ENCODE measurements at regions of chr14 and their contacts with region 1.

Region 1: GRCh38 chr14:89416002-89416995 is 734 bp downstream of the FOXN3 start:
- DNase-seq: peak; percentile 99
- H3K4me3 ChIP-seq: peak overlapping the region; percentile 55 to 78 (median 68)
- H3K27ac ChIP-seq: peak overlapping the region; percentile 65
- H3K4me1 ChIP-seq: peaks cover 6% of the 10 kb centered on the region
- H3K27me3 ChIP-seq: no peaks in the 10 kb centered on the region
- CTCF ChIP-seq: no peak
- POLR2A ChIP-seq: no peak

Region 2: GRCh38 chr14:89027097-89027740 is 389.1 kb before region 1 on chr14:
- CTCF ChIA-PET with region 1: no interaction called
- POLR2A ChIA-PET with region 1: no interaction called
- dilution Hi-C with region 1: no loop called
- intact Hi-C with region 1: loop called (anchors 5 kb)
- DNase-seq: peak; percentile 25
- H3K4me3 ChIP-seq: peak overlapping the region; percentile 40 to 65 (median 56)
- H3K27ac ChIP-seq: no peak overlapping the region
- H3K4me1 ChIP-seq: peaks cover 9% of the 10 kb centered on the region
- H3K27me3 ChIP-seq: peaks cover 25 to 39% of the 10 kb centered on the region in 2 experiments
- CTCF ChIP-seq: peak; percentile 74 to 88
- POLR2A ChIP-seq: no peak

Region 3: DNA sequence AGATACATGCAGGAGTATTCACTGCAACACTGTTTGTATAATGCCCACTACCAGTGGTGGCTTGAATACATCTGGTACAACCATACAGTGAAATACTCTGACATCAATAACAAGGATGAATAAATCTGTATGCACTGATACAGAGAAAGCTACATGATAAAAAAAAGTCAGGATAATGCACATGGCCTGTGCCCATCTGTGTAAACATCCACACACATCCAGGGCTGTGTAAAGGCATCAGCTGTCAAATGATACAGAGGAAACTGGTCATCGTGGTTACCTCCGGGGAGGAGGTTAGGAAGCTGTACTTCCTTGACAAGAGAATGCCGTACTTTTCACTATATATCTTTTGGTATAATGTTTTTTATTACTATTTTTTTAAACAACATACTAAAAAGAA is 175.9 kb before region 1 on chr14:
- CTCF ChIA-PET with region 1: no interaction called
- POLR2A ChIA-PET with region 1: no interaction called
- dilution Hi-C with region 1: no loop called
- intact Hi-C with region 1: loop called (anchors 5 kb)
- DNase-seq: peak; percentile 22
- H3K4me3 ChIP-seq: no peak overlapping the region
- H3K27ac ChIP-seq: peak overlapping the region; percentile 54
- H3K4me1 ChIP-seq: peaks cover 17% of the 10 kb centered on the region
- H3K27me3 ChIP-seq: no peaks in the 10 kb centered on the region
- CTCF ChIP-seq: no peak
- POLR2A ChIP-seq: no peak

Region 4: DNA sequence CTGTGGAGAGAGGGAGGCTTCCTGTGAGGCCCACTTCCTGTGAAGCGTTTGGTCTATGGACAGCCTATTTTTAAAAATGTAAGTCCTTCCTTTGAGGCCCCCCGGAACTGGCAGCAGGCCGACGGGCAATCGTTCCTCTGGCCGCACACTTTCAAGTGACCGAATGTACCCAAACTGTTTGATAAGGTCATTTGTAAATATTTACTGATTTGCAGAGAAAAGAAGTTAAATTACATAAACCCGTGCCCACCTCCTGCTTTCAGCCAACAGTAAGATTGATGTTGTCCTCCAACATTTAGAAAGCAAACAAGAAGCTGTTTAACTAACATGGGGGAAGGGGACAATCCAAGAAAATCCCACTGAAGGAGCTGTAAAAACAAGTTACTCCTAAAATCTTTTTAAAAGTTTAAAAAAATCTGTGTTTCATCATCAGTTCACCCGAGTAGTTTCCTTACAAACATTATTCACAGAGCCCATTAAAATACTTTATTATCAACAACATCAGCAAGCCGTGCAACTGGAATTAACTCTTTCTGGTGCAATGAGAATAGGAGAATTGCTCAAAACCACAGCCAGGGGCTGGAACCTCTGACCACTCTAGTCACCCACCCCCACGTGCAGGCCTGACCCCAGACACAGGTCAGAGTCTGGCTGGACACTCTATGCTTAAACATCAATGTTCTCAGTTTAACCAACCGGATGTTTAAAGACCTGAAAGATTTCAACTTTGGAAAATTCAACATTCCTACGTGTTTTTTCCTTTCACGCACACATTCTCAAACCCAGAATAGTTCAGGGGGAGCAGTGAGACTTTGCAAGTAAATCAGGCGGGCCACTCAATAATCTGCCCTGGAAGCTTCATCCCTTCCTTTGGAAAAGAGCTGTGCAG is 64.5 kb before region 1 on chr14:
- CTCF ChIA-PET with region 1: no interaction called
- POLR2A ChIA-PET with region 1: no interaction called
- dilution Hi-C with region 1: no loop called
- intact Hi-C with region 1: loop called (anchors 5 kb)
- DNase-seq: peak; percentile 51
- H3K4me3 ChIP-seq: no peak overlapping the region
- H3K27ac ChIP-seq: peak overlapping the region; percentile 10
- H3K4me1 ChIP-seq: peaks cover 14% of the 10 kb centered on the region
- H3K27me3 ChIP-seq: no peaks in the 10 kb centered on the region
- CTCF ChIP-seq: no peak
- POLR2A ChIP-seq: no peak

Region 5: DNA sequence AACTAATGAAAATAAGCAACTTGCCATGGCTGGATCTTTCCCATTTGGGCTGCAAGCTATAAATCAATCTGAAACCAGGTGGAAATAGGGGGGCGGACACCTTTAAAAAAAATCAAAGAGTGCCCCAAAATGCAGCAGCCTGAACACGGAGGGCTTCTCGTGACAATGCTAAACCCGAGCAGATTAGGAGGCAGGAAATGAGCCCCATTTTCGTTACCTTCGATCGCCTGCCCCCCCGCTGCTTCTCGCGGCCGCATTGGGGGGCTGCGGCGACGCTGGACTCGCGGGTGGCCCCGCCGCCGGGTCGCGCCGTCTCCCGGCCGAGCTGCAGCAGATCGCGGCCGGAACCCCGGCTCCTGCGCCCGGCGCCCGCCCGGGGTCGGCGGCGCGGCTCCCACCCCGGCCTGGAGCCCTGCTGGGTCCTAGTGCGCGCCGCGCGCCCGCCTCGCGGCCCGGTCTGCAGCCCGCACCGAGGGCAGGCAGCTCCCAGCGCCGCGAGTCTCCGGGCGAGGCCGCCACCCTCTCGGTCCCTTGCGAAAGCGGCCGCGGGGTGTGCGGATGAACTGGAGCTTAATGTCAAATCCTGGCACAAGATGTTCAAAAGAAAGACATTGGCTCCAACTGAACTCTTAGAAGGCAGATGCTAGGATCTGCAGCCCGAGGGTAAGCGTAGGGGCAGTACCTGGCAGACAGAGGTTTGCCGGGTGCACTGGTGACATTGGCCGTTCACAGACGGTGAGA is 202.7 kb after region 1 on chr14:
- CTCF ChIA-PET with region 1: no interaction called
- POLR2A ChIA-PET with region 1: no interaction called
- dilution Hi-C with region 1: no loop called
- intact Hi-C with region 1: loop called (anchors 1 kb)
- DNase-seq: peak; percentile 61
- H3K4me3 ChIP-seq: peak overlapping the region; percentile 91 to 97 (median 94)
- H3K27ac ChIP-seq: peak overlapping the region; percentile 77
- H3K4me1 ChIP-seq: peaks cover 28% of the 10 kb centered on the region
- H3K27me3 ChIP-seq: no peaks in the 10 kb centered on the region
- CTCF ChIP-seq: no peak
- POLR2A ChIP-seq: peak; percentile 65

Region 6: GRCh38 chr14:89750281-89750755 is 334.0 kb after region 1 on chr14:
- CTCF ChIA-PET with region 1: no interaction called
- POLR2A ChIA-PET with region 1: no interaction called
- dilution Hi-C with region 1: no loop called
- intact Hi-C with region 1: no loop called
- DNase-seq: no peak
- H3K4me3 ChIP-seq: no peak overlapping the region
- H3K27ac ChIP-seq: no peak overlapping the region
- H3K4me1 ChIP-seq: no peaks in the 10 kb centered on the region
- H3K27me3 ChIP-seq: no peaks in the 10 kb centered on the region
- CTCF ChIP-seq: no peak
- POLR2A ChIP-seq: no peak

Region 7: GRCh38 chr14:89773644-89774316 is 357.5 kb after region 1 on chr14:
- CTCF ChIA-PET with region 1: no interaction called
- POLR2A ChIA-PET with region 1: no interaction called
- dilution Hi-C with region 1: no loop called
- intact Hi-C with region 1: loop called (anchors 1 kb)
- DNase-seq: peak; percentile 12
- H3K4me3 ChIP-seq: no peak overlapping the region
- H3K27ac ChIP-seq: no peak overlapping the region
- H3K4me1 ChIP-seq: peaks cover 34% of the 10 kb centered on the region
- H3K27me3 ChIP-seq: no peaks in the 10 kb centered on the region
- CTCF ChIP-seq: no peak
- POLR2A ChIP-seq: no peak

Measured in endothelial cell of umbilical vein (primary cell).